GM12878 (cell line): ENCODE measurements at regions of chr17 and their contacts with region 1.

Region 1: DNA sequence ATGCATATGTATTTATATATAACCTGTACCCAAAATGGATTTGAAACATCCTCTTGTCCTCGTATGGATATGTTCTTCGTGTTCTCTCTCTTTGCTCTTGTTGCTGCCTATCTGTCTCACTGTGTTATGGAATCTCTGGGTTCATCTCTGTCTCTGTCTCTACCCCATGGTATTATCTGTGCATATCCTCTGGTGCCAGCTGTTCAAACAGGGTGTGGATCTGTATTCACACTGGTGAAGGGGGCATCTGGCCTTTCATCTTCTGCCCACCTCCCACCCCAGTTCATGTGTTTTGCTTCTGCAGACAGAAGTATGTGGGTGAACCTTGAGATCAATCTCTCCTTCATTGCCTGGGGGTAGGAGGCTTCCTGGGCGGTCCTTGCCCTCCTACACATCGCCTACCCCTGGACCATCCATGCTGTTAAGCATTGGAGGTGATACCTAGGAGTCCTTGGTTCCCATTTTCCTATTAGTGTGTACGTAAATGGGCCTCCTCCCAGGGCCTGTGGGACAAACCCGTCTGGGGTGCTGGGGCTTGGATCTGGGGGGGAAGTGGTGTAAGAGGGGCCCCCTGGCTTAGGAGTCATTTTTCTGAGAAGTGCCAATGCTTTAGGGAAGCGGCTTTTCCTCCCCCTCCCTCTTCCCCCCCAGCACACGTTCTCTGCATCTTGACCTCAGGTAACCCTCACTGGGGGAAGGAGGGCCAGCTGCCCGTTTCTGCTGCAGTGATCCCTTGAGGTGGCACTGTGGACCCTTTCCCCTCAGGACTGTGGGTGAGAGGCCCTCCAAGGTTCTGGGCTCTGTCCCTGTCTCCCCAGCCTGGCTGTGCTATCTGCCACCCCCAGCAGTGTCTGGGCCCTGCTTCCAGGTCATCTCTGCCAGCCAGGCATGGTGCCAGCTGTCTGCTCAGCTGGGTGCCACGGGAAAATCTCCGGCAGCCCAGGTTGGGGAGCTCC is 21.1 kb downstream of the RARA start:
- DNase-seq: no peak
- ATAC-seq: no peak
- H3K4me3 ChIP-seq: no peak overlapping the region
- H3K27ac ChIP-seq: peak overlapping the region; percentile 54
- H3K4me1 ChIP-seq: peaks cover 40% of the 10 kb centered on the region
- H3K27me3 ChIP-seq: no peaks in the 10 kb centered on the region
- CTCF ChIP-seq: no peak
- EP300 ChIP-seq: no peak
- POLR2A ChIP-seq: no peak
- RAD21 ChIP-seq: no peak

Region 2: GRCh38 chr17:40340880-40341807 is 11.0 kb after region 1 on chr17:
- CTCF ChIA-PET with region 1: interaction called, 7 read pairs
- POLR2A ChIA-PET with region 1: interaction called, 4 read pairs
- RAD21 ChIA-PET with region 1: interaction called, 4 read pairs
- SMC1A ChIA-PET with region 1: interaction called, 9 read pairs
- in situ Hi-C with region 1: no loop called
- intact Hi-C with region 1: loop called (anchors 1 kb)
- DNase-seq: no peak
- ATAC-seq: peak; percentile 95
- H3K4me3 ChIP-seq: peak overlapping the region; percentile 70
- H3K27ac ChIP-seq: no peak overlapping the region
- H3K4me1 ChIP-seq: peaks cover 54% of the 10 kb centered on the region
- H3K27me3 ChIP-seq: no peaks in the 10 kb centered on the region
- CTCF ChIP-seq: peak in 2 of 3 experiments; percentile 17 to 35; a peak in 4 of 6 replicates
- EP300 ChIP-seq: no peak
- POLR2A ChIP-seq: no peak
- RAD21 ChIP-seq: no peak